Cardiac septum (tissue), 1 donor: ENCODE measurements at regions of chr19 and their contacts with region 1.

Region 1: DNA sequence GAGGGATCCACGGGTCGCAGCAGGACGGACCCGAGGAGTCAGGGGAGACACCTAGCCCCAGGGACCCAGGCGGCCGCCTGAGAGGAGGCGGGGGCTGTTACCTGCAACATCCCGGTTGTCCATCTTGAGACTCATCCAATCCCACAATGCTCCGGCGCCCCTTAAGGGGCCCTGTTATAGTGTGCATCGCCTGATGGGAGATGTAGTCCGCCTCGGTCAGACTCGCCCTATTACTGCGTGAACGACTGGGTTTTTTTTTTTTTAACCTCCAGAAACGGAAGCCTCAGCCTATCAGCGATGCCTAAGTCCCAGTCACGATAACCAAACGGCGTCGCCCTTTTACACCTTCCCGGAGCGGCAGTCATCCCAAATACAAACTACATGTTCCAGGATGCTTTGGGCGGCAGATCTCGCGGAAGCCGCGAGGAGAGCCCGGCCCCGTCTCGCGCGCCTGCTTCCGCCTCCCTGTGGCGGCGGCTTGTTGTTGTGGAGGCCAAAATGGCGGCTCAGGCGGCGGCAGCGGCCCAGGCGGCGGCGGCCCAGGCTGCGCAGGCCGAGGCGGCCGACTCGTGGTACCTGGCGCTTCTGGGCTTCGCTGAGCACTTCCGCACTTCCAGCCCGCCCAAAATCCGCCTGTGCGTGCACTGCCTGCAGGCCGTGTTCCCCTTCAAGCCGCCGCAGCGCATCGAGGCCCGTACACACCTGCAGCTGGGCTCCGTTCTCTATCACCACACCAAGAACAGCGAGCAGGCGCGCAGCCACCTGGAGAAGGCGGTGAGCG is at the starts of genes MAU2 and SUGP1:
- DNase-seq: peak; percentile 96
- total RNA-seq, gene MAU2: 46.8 TPM
- total RNA-seq, gene SUGP1: 41.6 TPM

Region 2: DNA sequence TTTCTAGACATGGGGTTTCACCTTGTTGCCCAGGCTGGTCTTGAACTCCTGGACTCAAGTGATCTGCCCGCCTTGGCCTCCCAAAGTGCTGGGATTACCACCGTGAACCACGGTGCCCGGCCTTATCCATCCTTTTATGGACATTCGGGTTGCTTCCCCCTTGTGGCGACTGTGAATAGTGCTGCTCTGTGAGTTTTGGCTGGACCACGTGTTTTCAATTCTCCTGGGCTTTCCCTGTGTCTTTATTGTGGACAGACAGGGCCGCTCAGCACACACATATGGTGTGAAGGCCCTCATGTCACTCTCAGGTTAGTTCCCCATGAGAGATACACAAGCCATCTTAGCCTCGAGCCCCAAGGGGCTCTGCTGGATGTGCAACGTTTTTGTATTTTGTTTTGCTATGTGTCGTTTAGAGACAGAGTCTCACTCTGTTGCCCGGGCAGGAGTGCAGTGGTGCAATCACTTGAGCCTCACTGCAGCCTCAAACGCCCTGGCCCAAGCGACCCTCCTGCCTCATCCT is 40.6 kb after region 1 on chr19:
- intact Hi-C with region 1: loop called (anchors 2 kb)
- DNase-seq: peak; percentile 85

Region 3: GRCh38 chr19:19515764-19516519 is 195.4 kb after region 1 on chr19 and contains the start of gene NDUFA13:
- intact Hi-C with region 1: no loop called
- DNase-seq: peak; percentile 97
- total RNA-seq, gene NDUFA13: 779 TPM